K562 (cell line): ENCODE measurements at regions of chr11 and their contacts with region 1.

Region 1: DNA sequence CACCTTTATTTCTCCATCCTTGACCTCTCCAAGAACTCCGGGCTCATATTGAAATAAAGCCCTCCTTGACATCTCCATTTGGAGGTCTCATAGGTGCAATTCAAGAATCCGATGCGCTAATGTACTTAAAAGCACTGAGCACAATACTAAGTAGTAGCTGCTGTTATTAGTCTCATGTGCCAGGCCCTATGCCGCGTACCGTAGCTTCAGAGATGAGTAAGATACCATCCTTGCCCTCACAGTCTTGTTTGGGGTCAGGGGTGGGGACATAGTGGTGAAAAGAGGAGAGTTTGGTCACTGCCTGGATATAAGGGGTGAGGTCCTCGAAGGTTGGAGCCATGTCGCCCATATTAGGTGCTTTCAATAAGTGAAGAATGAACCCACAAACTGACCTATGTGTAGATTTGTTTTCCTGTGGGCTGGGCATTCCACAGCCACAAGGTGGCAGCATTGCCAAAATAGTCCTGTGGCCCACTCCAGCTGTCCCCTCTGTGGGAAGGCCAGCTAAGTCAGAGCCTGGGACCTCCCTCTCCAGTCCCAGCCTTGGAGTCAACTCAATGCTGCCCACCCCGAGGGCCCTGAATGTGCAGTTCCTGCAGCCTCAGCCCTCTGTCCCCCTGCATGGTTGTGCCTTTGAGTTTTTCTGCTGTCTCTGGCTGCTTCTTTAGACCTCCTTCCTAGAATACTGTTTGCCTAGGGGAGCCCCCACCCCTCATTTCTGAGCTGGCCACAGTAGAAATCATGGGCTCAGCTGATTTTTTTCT is 6.5 kb downstream of the DCPS start:
- DNase-seq: peak; percentile 72 to 83 (median 74)
- ATAC-seq: peak; percentile 98
- H3K4me3 ChIP-seq: no peak overlapping the region
- H3K27ac ChIP-seq: no peak overlapping the region
- H3K4me1 ChIP-seq: no peaks in the 10 kb centered on the region
- H3K27me3 ChIP-seq: no peaks in the 10 kb centered on the region; a peak in 1 of 5 replicates
- CTCF ChIP-seq: peak; percentile 85 to 96 (median 92)
- EP300 ChIP-seq: no peak
- POLR2A ChIP-seq: no peak
- RAD21 ChIP-seq: peak; percentile 95 to 99

Region 2: DNA sequence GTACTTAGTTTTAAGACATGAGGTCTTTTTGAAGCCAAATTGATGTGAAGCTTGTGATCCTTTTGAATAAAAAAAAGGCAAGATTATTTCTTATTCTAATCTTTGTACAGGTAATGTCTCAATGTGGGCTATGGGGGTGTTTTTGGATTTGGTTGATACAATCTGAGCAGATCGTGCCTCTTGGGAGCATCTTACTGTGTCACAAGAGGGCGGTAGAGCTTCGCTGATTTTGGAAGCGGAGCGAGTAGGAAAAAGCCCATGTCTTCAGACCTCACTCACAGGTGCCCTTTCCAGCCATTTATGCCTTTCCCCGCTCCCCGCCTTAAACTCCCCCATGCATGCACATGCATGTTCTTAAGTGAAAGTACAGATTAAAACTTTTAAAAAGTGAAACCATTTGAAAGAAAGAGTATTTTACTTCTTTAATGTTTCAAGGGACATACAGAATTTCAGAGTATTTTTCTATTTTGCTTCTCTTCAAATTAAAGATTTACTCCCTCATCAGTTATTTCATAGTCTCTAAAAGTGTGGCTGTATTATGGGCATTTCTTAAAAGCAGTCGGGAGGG is 387.3 kb before region 1 on chr11:
- CTCF ChIA-PET with region 1: no interaction called
- POLR2A ChIA-PET with region 1: no interaction called
- in situ Hi-C with region 1: no loop called
- intact Hi-C with region 1: loop called (anchors 5 kb)
- DNase-seq: peak; percentile 70 to 82 (median 72)
- ATAC-seq: peak; percentile 96
- H3K4me3 ChIP-seq: no peak overlapping the region
- H3K27ac ChIP-seq: no peak overlapping the region
- H3K4me1 ChIP-seq: no peaks in the 10 kb centered on the region
- H3K27me3 ChIP-seq: peaks cover 45 to 68% of the 10 kb centered on the region in 2 experiments
- CTCF ChIP-seq: peak; percentile 80 to 90 (median 81)
- EP300 ChIP-seq: no peak
- POLR2A ChIP-seq: no peak
- RAD21 ChIP-seq: peak; percentile 84 to 88

Region 3: DNA sequence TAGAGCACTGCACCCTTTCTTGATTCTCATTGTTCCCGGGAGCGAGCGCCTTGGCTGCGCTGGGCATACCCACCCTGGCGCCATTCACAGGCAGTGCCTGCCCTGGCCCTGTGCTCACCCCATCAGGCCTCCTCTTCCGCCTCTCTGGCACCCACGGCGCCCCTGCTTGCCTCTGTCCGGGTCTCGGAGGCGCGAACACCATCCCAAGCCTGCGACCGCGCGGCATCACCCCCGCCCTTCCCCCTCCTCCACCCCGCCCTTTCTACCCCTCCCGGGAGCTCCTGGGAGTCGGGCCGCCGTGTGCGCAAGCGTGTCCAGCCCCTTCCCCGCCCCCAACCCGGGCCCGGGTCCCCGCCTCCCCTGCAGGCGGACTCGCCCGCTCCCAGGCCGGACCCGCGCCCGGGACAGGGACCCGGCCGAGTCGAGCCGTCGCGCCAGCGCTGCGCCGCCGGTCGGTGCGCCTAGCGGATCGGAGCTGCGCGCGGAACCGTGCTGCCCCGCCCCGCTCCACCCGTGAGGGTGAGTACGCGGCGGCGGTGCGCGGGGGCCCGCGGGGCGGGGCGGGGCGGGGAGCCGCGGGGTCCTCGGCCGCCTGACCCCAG is 45.0 kb after region 1 on chr11 and contains the start of gene ST3GAL4:
- CTCF ChIA-PET with region 1: interaction called, 9 read pairs
- POLR2A ChIA-PET with region 1: interaction called, 3 read pairs
- in situ Hi-C with region 1: no loop called
- intact Hi-C with region 1: loop called (anchors 1 kb)
- DNase-seq: peak; percentile 88 to 98 (median 96)
- ATAC-seq: peak; percentile 83
- H3K4me3 ChIP-seq: peak within 1 kb of the TSS; percentile 65
- H3K27ac ChIP-seq: peak within 1 kb of the TSS; percentile 91
- H3K4me1 ChIP-seq: peaks cover 47 to 59% of the 10 kb centered on the region in 2 experiments
- H3K27me3 ChIP-seq: no peaks in the 10 kb centered on the region
- CTCF ChIP-seq: no peak
- EP300 ChIP-seq: no peak
- POLR2A ChIP-seq: peak; percentile 78
- RAD21 ChIP-seq: no peak
- polyA plus RNA-seq, gene ST3GAL4: 0.27 to 0.53 TPM

Region 4: GRCh38 chr11:126391970-126392639 is 81.7 kb after region 1 on chr11:
- CTCF ChIA-PET with region 1: interaction called, 27 read pairs
- POLR2A ChIA-PET with region 1: interaction called, 3 read pairs
- in situ Hi-C with region 1: no loop called
- intact Hi-C with region 1: loop called (anchors 1 kb)
- DNase-seq: peak; percentile 26 to 52 (median 42)
- ATAC-seq: peak; percentile 93
- H3K4me3 ChIP-seq: no peak overlapping the region
- H3K27ac ChIP-seq: no peak overlapping the region
- H3K4me1 ChIP-seq: no peaks in the 10 kb centered on the region; a peak in 4 of 5 replicates
- H3K27me3 ChIP-seq: no peaks in the 10 kb centered on the region
- CTCF ChIP-seq: peak; percentile 60 to 68 (median 67)
- EP300 ChIP-seq: no peak
- POLR2A ChIP-seq: no peak
- RAD21 ChIP-seq: peak; percentile 56 to 81; a peak in 3 of 4 replicates

Region 5: GRCh38 chr11:126416542-126417090 is 106.2 kb after region 1 on chr11:
- CTCF ChIA-PET with region 1: no interaction called
- POLR2A ChIA-PET with region 1: no interaction called
- in situ Hi-C with region 1: loop called (anchors 25 kb)
- intact Hi-C with region 1: loop called (anchors 5 kb)
- DNase-seq: no peak
- ATAC-seq: no peak
- H3K4me3 ChIP-seq: no peak overlapping the region
- H3K27ac ChIP-seq: no peak overlapping the region
- H3K4me1 ChIP-seq: peaks cover 5 to 9% of the 10 kb centered on the region in 2 experiments; a peak in 3 of 5 replicates
- H3K27me3 ChIP-seq: peaks cover 0 to 5% of the 10 kb centered on the region in 2 experiments; a peak in 1 of 5 replicates
- CTCF ChIP-seq: no peak
- EP300 ChIP-seq: no peak
- POLR2A ChIP-seq: no peak
- RAD21 ChIP-seq: no peak

Region 6: GRCh38 chr11:126480410-126481302 is 170.2 kb after region 1 on chr11:
- CTCF ChIA-PET with region 1: interaction called, 12 read pairs
- POLR2A ChIA-PET with region 1: interaction called, 3 read pairs
- in situ Hi-C with region 1: no loop called
- intact Hi-C with region 1: loop called (anchors 1 kb)
- DNase-seq: peak; percentile 86 to 89 (median 87)
- ATAC-seq: peak; percentile 86
- H3K4me3 ChIP-seq: no peak overlapping the region
- H3K27ac ChIP-seq: peak overlapping the region; percentile 60; the same call in 1 of the 3 replicates
- H3K4me1 ChIP-seq: peaks cover 3 to 4% of the 10 kb centered on the region in 2 experiments; a peak in 2 of 5 replicates
- H3K27me3 ChIP-seq: peaks cover 5 to 42% of the 10 kb centered on the region in 2 experiments; a peak in 4 of 5 replicates
- CTCF ChIP-seq: peak; percentile 86 to 96 (median 93)
- EP300 ChIP-seq: no peak; the same call in 1 of the 2 replicates
- POLR2A ChIP-seq: no peak
- RAD21 ChIP-seq: peak; percentile 74 to 76

Region 7: GRCh38 chr11:126716456-126717083 is 406.2 kb after region 1 on chr11:
- CTCF ChIA-PET with region 1: no interaction called
- POLR2A ChIA-PET with region 1: no interaction called
- in situ Hi-C with region 1: no loop called
- intact Hi-C with region 1: loop called (anchors 5 kb)
- DNase-seq: peak; percentile 46 to 56 (median 50)
- ATAC-seq: peak; percentile 82
- H3K4me3 ChIP-seq: no peak overlapping the region
- H3K27ac ChIP-seq: no peak overlapping the region
- H3K4me1 ChIP-seq: peaks cover 0 to 7% of the 10 kb centered on the region in 2 experiments; a peak in 2 of 5 replicates
- H3K27me3 ChIP-seq: peaks cover 0 to 25% of the 10 kb centered on the region in 2 experiments; a peak in 2 of 5 replicates
- CTCF ChIP-seq: peak; percentile 61 to 74 (median 62)
- EP300 ChIP-seq: no peak
- POLR2A ChIP-seq: no peak
- RAD21 ChIP-seq: peak; percentile 31 to 65; a peak in 3 of 4 replicates